Activated CD4-positive, alpha-beta T cell treated with anti-CD3 and anti-CD28 coated beads, Interleukin-2, amount 10 ng/mL, durations not matched to agents 7 days and 5 days (primary cell): ENCODE measurements at regions of chrX and their contacts with region 1.

Region 1: DNA sequence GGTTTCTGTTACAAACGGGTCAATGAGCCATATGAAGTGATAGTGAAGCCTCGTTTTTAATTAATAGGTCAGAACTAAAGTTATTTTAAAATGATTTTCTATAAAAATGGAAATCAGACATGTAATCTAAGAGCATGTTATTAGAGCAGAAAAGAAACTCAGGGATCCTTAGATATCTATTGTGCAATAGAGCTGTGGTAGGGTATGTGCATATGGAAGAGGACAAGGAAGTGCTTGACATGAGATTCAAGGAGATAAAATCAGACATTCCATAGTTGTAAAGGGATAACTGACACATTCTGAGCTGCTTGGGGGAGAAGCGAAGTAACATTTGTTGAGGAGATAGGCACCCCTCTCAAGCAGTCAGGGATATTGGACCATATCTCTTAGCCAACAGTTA is 143.0 kb downstream of the AFF2 start:
- DNase-seq: no peak
- H3K4me3 Mint-ChIP-seq: no peak overlapping the region
- H3K27ac Mint-ChIP-seq: no peak overlapping the region
- H3K4me1 Mint-ChIP-seq: no peaks in the 10 kb centered on the region
- H3K27me3 Mint-ChIP-seq: no peaks in the 10 kb centered on the region

Region 2: DNA sequence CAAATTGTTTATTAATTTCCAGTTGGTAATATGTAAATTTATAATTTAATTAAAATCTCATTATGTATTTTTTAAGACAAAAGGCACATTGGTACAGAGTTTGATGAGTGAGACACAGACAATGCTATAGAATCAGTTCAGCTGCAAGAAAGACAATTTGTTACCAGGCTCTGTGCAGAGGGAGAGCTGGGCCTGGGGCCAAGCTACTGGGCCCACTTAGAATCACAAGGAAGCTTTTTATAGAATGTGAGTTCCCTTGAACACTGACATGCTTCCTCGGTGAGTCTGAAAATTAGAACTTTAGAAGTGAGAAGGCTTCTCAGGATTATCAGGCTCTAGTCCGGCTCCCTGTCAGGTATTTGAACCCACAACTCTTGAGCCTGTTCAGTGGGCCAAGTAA is 14.0 kb before region 1 on chrX:
- CTCF ChIA-PET with region 1: interaction called, 12 read pairs
- POLR2A ChIA-PET with region 1: no interaction called
- DNase-seq: no peak
- H3K4me3 Mint-ChIP-seq: no peak overlapping the region
- H3K27ac Mint-ChIP-seq: no peak overlapping the region
- H3K4me1 Mint-ChIP-seq: no peaks in the 10 kb centered on the region
- H3K27me3 Mint-ChIP-seq: no peaks in the 10 kb centered on the region

Region 3: DNA sequence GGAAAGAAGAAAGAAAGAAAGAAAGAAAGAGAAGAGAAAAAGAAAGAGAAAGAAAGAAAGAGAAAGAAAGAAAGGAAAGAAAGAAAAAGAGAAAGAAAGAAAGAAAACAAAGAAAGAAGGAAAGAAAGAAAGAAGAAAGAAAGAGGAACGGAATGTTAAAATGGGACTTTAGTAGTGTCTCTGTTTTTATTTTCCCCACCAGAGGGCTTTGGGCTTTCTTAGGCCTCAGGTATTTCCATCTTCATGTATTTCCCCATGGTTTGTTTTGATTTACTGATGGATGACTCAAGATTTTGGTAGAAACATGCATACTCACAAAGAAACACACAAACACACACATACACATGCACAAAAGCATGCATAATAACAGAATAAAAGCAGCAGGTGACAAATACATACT is 38.1 kb after region 1 on chrX:
- CTCF ChIA-PET with region 1: no interaction called
- POLR2A ChIA-PET with region 1: no interaction called
- DNase-seq: no peak
- H3K4me3 Mint-ChIP-seq: no peak overlapping the region
- H3K27ac Mint-ChIP-seq: no peak overlapping the region
- H3K4me1 Mint-ChIP-seq: no peaks in the 10 kb centered on the region
- H3K27me3 Mint-ChIP-seq: no peaks in the 10 kb centered on the region